ENCODE measurements at regions of chr3 and their contacts with region 1.

Region 1: GRCh38 chr3:52339612-52340011 is 23.5 kb downstream of the DNAH1 start:
- DNase-seq: peak; percentile 35
- ATAC-seq: peak; percentile 58
- H3K4me3 Mint-ChIP-seq: no peak overlapping the region
- H3K27ac Mint-ChIP-seq: no peak overlapping the region
- H3K4me1 Mint-ChIP-seq: no peaks in the 10 kb centered on the region
- H3K27me3 Mint-ChIP-seq: no peaks in the 10 kb centered on the region; the same call in 1 of the 2 replicates
- CTCF ChIP-seq: peak; percentile 67

Region 2: DNA sequence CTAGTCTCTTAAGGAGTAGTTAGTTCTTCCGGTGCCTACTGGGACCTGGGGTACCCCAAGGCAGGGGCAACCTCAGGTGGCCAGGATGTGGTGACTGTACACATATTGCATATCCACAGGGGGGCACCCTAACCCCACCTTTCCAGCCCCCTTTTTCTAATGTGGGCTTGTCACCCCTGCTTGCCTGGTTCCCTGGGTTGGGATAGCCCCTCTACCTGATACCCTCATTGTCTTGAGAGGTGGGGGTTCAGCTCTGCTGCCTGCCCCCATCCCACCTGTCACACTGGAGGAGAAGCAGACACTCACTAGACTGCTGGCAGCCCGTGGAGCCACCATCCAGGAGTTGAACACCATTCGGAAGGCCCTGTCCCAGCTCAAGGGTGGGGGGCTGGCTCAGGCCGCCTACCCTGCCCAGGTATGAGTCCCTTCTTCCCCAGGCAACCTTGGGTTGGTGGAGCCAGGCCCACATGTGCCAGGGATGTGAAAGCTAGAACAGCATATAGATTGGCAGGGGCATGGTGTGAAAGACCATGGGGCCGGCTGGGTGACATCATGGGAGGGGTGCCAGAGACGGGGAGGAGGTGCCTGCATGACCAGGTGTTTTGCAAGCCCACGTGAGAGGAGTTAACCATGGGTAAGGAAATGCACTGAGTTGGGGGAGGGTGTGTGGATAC is 48.0 kb before region 1 on chr3:
- CTCF ChIA-PET with region 1: interaction called, 43 read pairs
- POLR2A ChIA-PET with region 1: no interaction called
- DNase-seq: peak; percentile 69
- ATAC-seq: peak; percentile 10
- H3K4me3 Mint-ChIP-seq: no peak overlapping the region
- H3K27ac Mint-ChIP-seq: no peak overlapping the region; the same call in 1 of the 2 replicates
- H3K4me1 Mint-ChIP-seq: peaks cover 5% of the 10 kb centered on the region
- H3K27me3 Mint-ChIP-seq: no peaks in the 10 kb centered on the region
- CTCF ChIP-seq: peak; percentile 27; the same call in 1 of the 2 replicates

Region 3: GRCh38 chr3:52299879-52300611 is 39.6 kb before region 1 on chr3:
- CTCF ChIA-PET with region 1: interaction called, 43 read pairs
- POLR2A ChIA-PET with region 1: no interaction called
- DNase-seq: peak; percentile 26
- ATAC-seq: peak; percentile 55
- H3K4me3 Mint-ChIP-seq: peak overlapping the region; percentile 65
- H3K27ac Mint-ChIP-seq: no peak overlapping the region
- H3K4me1 Mint-ChIP-seq: peaks cover 18% of the 10 kb centered on the region
- H3K27me3 Mint-ChIP-seq: peaks cover 6% of the 10 kb centered on the region
- CTCF ChIP-seq: no peak

Region 4: DNA sequence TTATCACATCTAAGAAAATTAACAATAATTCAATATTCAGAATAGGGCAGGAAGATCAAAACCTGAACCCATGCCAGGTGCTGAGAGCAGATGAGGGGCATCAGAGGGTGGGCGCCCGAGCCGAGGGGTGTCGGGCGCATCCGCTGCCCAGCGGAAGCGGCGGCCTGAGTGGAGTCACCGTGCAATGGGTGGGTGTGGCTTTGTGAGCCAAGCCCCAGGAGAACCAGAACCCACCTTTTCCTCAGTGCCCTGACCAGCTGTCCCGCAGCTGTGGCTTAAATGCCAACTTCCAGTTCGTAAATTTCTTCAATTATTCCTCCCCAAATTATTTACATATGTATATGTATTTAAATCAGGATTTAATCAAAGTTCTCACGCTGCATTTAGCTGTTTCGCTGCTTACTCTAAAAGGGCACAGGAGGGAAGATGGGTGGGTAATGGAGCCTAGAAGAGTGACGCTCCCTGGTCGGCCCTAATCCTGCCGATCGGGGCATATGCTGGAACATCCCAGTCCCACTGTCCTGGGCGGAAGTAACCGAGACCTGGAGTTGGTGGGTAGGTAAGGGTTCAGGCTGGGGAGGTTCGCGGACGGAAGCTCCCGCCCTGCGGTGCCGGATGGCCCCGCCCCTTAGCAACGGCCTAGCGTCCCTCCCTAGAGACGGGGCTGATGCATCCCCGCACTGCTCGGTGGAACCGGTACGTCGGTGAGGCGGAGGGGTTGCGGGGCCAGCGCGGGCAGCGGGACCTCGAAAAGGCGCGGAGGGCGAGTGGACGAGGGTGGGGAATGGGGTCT is 22.2 kb before region 1 on chr3:
- CTCF ChIA-PET with region 1: interaction called, 13 read pairs
- POLR2A ChIA-PET with region 1: no interaction called
- DNase-seq: peak; percentile 93
- ATAC-seq: peak; percentile 97
- H3K4me3 Mint-ChIP-seq: peak overlapping the region; percentile 67
- H3K27ac Mint-ChIP-seq: no peak overlapping the region; the same call in 1 of the 2 replicates
- H3K4me1 Mint-ChIP-seq: peaks cover 6% of the 10 kb centered on the region; the same call in 1 of the 2 replicates
- H3K27me3 Mint-ChIP-seq: peaks cover 27% of the 10 kb centered on the region
- CTCF ChIP-seq: no peak

Region 5: DNA sequence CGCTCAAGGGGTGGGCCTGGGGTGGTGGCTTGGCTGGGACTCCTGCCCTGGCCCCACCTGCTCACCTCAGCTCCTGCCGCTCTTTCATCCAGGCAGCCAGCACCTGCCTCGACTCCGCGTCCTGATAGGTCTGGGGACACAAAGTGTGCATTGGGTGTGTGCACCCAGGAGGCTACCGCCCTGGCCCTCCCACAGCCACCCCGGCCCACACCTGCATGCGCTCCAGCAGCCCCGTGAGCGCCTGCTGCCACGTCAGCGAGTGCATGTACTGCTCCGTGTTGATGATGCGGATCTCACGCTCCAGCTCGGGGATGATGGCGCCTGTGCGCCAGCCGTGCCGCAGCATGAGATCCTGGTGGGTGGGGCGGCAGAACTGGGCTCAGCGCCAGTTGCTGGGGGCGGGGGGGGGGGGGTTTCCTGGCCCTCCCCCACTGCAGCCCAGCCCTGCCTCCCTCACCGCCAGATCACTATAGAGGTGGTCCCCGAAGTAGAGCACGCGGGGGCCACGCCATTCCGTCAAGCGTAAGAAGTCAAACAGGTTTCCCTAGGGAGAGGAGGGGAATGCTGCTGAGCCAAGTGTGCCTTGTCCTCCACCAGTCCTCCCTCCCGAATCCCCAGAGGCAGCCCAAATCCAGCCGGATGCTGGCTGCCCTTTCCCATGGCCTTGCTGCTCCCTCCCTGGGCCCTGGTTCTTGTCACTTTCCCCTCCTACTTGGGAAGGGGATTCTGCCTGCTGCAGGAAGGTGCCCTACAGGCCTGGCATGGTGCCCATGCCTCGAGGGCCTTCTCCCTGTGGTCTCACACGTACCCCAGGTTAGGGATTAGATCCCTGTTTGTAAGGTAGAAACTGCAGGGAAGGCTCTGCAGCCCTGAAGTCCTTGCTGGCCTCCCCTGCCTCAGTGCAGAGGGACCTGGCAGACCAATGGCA is 185.4 kb after region 1 on chr3:
- CTCF ChIA-PET with region 1: no interaction called
- POLR2A ChIA-PET with region 1: no interaction called
- DNase-seq: peak; percentile 6
- ATAC-seq: no peak
- H3K4me3 Mint-ChIP-seq: no peak overlapping the region
- H3K27ac Mint-ChIP-seq: no peak overlapping the region
- H3K4me1 Mint-ChIP-seq: no peaks in the 10 kb centered on the region
- H3K27me3 Mint-ChIP-seq: no peaks in the 10 kb centered on the region; the same call in 1 of the 2 replicates
- CTCF ChIP-seq: no peak

Measured in WTC11 (cell line).